ENCODE measurements at regions of chr17 and their contacts with region 1.

Region 1: GRCh38 chr17:5198472-5198871 is 6.8 kb upstream of the ZNF594 start:
- DNase-seq: peak in 1 of 5 donors; percentile 8
- H3K4me3 ChIP-seq: no peak overlapping the region
- H3K4me3 Mint-ChIP-seq: peak overlapping the region in 3 of 7 donors; percentile 20 to 68 (median 41)
- H3K27ac ChIP-seq: no peak overlapping the region
- H3K27ac Mint-ChIP-seq: peak overlapping the region in 6 of 8 donors; percentile 32 to 75 (median 66)
- H3K4me1 ChIP-seq: peaks cover 8% of the 10 kb centered on the region
- H3K4me1 Mint-ChIP-seq: peaks cover 14 to 18% (median 15%) of the 10 kb centered on the region in 3 donors
- H3K27me3 ChIP-seq: no peaks in the 10 kb centered on the region
- H3K27me3 Mint-ChIP-seq: no peaks in the 10 kb centered on the region

Region 2: DNA sequence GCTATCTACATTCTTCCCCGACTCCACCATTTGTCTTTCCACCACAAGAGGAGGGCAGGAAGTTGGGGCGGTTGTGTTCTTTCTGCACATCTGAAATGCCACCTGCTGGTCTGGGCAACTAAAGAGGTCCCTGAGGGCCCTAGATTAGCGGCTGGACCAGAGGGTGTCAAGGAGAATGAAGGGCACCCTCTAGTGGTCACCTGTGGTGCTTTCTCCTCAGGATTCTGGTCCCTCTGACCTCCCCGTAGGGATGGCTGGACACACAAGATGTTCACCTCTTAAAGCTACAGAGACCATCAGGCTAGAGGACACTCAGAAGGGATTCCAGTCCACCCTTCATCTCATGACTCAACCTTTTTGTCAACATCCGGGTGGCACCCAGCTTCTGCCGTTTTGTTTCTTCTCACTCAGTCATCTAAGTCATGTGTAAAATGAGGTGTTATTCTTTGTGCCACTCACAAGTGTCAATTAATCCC is 39.1 kb after region 1 on chr17:
- CTCF ChIA-PET with region 1: interaction called, 11 read pairs
- POLR2A ChIA-PET with region 1: no interaction called
- DNase-seq: peak in 4 of 5 donors; percentile 7 to 58 (median 30)
- H3K4me3 ChIP-seq: no peak overlapping the region
- H3K4me3 Mint-ChIP-seq: peak overlapping the region in 5 of 7 donors; percentile 8 to 59 (median 54)
- H3K27ac ChIP-seq: peak overlapping the region; percentile 41
- H3K27ac Mint-ChIP-seq: peak overlapping the region; percentile 70 to 96 (median 82)
- H3K4me1 ChIP-seq: peaks cover 39% of the 10 kb centered on the region
- H3K4me1 Mint-ChIP-seq: peaks cover 52 to 63% (median 56%) of the 10 kb centered on the region in 3 donors
- H3K27me3 ChIP-seq: no peaks in the 10 kb centered on the region
- H3K27me3 Mint-ChIP-seq: no peaks in the 10 kb centered on the region